ENCODE measurements at regions of chr22 and their contacts with region 1.

Region 1: DNA sequence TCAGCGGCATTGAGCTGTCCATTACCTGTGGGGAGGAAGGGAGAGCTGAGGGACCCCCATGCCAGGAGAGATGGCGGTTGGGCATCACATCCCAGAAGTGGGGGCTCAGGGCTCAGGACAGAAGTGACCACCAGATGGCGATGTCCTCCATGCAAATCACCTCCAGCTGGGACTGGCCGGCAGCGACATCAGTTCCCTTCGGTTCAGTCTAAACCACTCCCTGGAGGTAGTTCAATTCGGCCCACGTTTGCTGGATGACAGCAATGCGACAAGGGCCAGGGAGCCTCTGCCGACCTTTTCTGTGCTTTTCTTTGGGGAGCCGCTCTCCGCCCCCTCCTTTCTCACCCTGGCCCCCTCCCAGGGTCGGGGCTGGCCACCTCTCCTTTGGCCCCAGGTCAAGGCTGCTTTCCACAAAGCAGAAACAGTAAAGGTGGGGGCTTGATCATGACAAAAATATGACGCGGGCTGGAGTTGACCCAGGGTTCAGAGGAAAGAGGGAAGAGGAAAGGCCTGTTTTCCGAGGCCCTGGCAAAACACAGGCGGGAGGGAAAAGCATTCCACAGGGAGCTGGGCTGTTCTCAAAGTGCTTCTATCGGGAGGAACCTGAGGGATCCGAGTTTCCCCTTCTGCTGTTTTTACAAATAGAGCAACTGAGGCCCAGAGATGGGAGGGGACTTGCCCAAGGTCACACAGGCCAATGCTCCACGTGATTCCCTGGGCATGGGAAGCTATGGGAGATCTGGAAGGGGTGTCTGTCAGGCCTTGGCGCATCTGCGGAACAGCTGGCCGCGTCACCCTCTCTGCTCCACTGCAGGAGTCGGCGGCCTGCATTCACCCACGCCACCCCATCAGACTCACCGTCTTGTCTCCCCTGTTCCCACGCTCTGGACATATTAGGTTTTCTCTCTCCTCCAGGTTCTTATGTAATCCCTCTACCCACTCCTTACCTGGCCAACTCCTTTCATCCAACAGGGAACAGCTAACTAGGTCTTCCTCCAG is 54.7 kb downstream of the FBXO7 start:
- DNase-seq: peak; percentile 92
- ATAC-seq: peak; percentile 77

Region 2: DNA sequence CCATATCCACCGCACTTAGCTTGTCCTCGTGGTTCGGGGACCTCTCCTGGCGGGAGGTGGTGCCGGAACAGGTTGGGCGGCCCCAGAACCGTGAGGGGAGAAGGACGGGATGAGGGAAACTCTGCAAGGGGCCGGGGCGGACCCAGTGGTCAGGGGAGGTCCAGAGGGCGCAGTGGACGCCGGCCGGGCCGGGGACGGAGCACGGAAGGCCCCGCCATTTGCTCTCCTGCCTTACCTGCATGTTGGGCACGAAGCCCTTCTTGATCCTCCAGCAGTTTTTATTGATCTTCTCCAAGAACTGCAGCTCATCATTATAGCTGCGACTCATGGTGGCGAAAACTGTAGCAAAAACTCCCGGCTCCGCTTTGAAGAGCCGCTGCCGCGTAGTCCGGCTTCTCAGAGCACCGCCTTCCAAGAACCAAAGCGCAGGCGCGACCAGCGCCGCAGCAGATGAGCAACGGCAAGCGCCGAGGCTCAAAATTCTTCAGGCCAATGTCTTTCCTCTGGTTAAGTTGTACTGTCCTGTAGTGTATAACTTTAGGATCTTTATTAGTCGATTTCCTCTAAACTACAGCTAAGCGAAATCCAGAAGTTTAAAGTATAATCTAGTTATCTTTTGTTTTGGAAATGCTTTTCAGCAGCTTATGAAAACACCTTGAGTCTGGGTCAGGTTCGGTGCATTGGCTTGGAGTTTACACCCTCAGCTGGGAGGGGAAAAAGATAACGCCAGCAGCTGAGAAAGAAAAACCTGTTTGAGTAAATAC is 117.3 kb before region 1 on chr22 and contains the start of gene RTCB:
- intact Hi-C with region 1: no loop called
- DNase-seq: peak; percentile 94
- ATAC-seq: peak; percentile 89
- total RNA-seq, gene RTCB: 37.6 TPM

Region 3: GRCh38 chr22:32579509-32580234 is 50.4 kb after region 1 on chr22:
- intact Hi-C with region 1: loop called (anchors 2 kb)
- DNase-seq: no peak
- ATAC-seq: peak; percentile 46

Region 4: GRCh38 chr22:32625985-32626384 is 96.7 kb after region 1 on chr22:
- intact Hi-C with region 1: loop called (anchors 2 kb)
- DNase-seq: no peak
- ATAC-seq: peak; percentile 30

Region 5: GRCh38 chr22:32796865-32797573 is 267.7 kb after region 1 on chr22:
- intact Hi-C with region 1: loop called (anchors 1 kb)
- DNase-seq: peak; percentile 87
- ATAC-seq: peak; percentile 59

Region 6: DNA sequence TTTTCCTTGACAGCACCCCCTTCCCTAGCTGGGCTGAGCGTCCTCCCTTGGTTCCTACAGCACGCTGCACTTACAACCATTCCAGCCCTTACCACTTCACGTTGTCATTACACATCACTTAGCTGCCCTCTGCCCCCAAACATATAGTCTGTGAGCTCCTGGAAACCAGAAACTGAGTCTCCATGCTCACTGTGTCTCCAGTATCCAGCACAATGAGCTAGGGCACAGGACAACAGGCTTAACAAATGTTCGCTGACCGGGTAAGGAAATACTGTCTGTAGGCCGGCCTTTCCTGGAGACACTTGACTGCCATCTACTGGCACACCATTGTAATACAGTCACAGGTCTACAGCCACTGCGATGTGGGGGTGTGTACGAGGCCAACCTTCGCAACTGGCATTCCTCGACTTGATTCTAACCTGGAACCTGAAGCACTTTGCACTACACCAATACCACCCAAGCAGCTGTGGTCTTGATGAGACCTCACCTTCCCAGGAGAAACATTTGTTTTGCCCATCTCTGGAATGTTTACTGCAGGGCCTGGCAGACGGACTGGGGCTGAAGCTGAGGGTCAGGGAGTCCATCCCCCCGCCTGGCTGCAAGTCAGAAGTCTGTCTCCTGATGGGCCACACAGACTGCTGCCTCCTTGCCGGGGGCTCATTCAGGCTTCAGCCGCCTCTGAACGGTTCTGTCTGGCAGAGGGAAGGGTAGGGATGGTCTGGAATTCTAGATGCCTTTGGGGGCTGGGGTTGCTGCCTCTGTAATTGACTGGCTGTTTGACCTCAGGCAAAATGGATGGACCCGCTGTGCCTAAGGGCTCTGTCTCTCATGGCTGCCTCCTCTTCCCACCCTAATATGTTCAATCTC is 456.8 kb after region 1 on chr22:
- intact Hi-C with region 1: loop called (anchors 5 kb)
- DNase-seq: no peak
- ATAC-seq: peak; percentile 96

Region 7: GRCh38 chr22:33202455-33202854 is 673.2 kb after region 1 on chr22:
- intact Hi-C with region 1: loop called (anchors 2 kb)
- DNase-seq: no peak
- ATAC-seq: no peak